ENCODE measurements at regions of chr14 and their contacts with region 1.

Region 1: GRCh38 chr14:61025251-61026223 is 44.5 kb downstream of the SLC38A6 start:
- DNase-seq: peak; percentile 26 to 69 (median 54)
- ATAC-seq: peak; percentile 41 to 59
- H3K4me3 ChIP-seq: no peak overlapping the region
- H3K27ac ChIP-seq: no peak overlapping the region
- H3K4me1 ChIP-seq: no peaks in the 10 kb centered on the region
- H3K27me3 ChIP-seq: no peaks in the 10 kb centered on the region

Region 2: GRCh38 chr14:60622917-60623257 is 402.6 kb before region 1 on chr14:
- intact Hi-C with region 1: loop called (anchors 5 to 10 kb)
- DNase-seq: no peak
- ATAC-seq: peak in 1 of 2 donors; percentile 77
- H3K4me3 ChIP-seq: no peak overlapping the region
- H3K27ac ChIP-seq: no peak overlapping the region
- H3K4me1 ChIP-seq: no peaks in the 10 kb centered on the region
- H3K27me3 ChIP-seq: no peaks in the 10 kb centered on the region

Region 3: GRCh38 chr14:60632777-60633176 is 392.8 kb before region 1 on chr14:
- intact Hi-C with region 1: loop called (anchors 5 to 10 kb)
- DNase-seq: no peak
- ATAC-seq: no peak
- H3K4me3 ChIP-seq: no peak overlapping the region
- H3K27ac ChIP-seq: no peak overlapping the region
- H3K4me1 ChIP-seq: no peaks in the 10 kb centered on the region
- H3K27me3 ChIP-seq: peaks cover 6% of the 10 kb centered on the region

Region 4: DNA sequence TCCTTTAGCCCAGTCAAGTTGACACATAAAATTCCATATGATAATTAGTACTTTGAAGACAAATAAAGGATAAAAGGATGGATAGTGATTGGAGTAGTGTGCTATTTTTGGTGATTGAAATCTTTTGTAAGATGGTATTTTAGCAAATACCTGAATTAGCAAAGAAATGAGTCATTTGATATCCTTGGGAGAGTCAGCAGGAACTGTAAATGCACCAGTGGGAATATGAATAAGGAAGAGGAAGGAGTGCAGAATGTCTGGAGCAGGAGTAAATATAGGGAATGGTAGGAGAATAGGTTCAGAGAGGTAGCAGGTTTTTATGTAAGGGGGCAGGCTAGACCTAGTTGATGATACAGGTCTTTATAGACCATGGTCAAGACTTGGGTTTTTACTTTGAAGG is 119.6 kb before region 1 on chr14:
- intact Hi-C with region 1: no loop called
- DNase-seq: no peak
- ATAC-seq: no peak
- H3K4me3 ChIP-seq: no peak overlapping the region
- H3K27ac ChIP-seq: no peak overlapping the region
- H3K4me1 ChIP-seq: peaks cover 1% of the 10 kb centered on the region
- H3K27me3 ChIP-seq: no peaks in the 10 kb centered on the region

Measured in right cardiac atrium (tissue), 5 donors.